Colonic mucosa (tissue), 4 donors: ENCODE measurements at regions of chr3 and their contacts with region 1.

Region 1: DNA sequence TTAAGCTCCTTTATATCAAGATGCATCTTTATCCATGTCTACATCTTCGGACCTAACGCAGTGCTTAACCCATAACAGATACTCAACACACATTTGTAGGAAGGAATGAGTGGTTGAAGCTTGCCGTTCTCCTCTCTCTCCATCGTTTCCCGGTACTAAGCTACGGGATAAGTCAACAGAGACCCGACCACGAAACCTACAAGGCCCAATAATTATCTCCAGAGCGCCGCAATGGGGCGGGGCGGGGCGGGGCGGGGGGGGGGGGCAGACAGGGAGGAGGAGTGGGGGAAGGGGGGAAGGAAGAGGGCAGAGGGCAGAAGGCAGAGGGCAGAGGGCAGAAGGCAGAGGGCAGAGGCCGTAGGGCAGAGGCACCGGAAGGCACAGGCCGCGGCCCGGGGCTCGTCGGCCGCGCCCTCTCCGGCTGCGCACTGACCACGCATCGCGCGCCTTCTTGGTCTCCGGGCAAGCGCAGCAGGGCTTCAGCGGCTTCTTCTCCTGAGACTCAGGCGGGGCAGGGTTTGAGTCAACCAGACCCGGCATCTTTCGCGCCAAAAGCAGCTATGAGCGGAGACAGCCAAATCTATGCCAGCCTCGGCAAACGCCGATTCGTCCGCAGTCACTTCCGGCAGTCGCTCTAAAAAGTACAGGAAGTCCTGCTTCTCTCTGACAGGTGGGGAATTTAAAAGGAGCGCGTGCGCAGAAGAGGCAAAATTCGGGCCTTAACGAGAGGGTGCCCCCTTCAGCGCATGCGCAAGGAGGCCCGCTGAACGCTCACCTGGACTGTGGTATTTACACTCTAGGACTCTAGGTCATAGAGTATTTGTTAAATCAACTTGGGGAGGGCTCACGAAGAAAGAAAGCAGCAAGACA is at the start of gene COX17:
- DNase-seq: peak; percentile 98
- H3K4me3 ChIP-seq: peak within 1 kb of the TSS; percentile 64
- H3K27ac ChIP-seq: peak within 1 kb of the TSS; percentile 91
- H3K4me1 ChIP-seq: peaks cover 9% of the 10 kb centered on the region
- H3K27me3 ChIP-seq: no peaks in the 10 kb centered on the region
- CTCF ChIP-seq: no peak
- total RNA-seq, gene COX17: 53.5 to 64.5 TPM

Region 2: DNA sequence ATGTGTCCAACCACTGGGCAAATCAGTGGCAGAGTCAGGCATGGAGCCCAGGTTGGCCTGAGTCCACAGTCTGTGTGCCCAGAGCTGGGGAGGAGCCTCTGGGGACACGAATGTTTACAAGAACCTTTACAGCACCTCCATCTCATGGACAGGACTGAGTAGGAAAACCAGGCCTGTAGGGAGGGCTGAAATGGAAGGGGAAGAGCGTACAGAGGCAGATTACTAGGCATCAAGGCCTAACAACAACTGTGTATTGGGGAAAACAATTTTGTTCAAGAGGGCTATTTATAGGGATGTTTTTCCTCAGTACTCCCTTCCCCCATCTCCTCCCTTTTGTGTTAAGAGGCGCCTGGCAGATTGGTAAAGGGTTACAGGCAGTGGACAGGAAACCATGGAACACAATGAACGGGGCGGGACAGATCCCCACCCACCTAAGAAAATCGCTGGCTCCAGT is 397.9 kb before region 1 on chr3:
- intact Hi-C with region 1: loop called (anchors 10 kb)
- DNase-seq: no peak
- H3K4me3 ChIP-seq: no peak overlapping the region
- H3K27ac ChIP-seq: no peak overlapping the region
- H3K4me1 ChIP-seq: no peaks in the 10 kb centered on the region
- H3K27me3 ChIP-seq: no peaks in the 10 kb centered on the region
- CTCF ChIP-seq: no peak

Region 3: DNA sequence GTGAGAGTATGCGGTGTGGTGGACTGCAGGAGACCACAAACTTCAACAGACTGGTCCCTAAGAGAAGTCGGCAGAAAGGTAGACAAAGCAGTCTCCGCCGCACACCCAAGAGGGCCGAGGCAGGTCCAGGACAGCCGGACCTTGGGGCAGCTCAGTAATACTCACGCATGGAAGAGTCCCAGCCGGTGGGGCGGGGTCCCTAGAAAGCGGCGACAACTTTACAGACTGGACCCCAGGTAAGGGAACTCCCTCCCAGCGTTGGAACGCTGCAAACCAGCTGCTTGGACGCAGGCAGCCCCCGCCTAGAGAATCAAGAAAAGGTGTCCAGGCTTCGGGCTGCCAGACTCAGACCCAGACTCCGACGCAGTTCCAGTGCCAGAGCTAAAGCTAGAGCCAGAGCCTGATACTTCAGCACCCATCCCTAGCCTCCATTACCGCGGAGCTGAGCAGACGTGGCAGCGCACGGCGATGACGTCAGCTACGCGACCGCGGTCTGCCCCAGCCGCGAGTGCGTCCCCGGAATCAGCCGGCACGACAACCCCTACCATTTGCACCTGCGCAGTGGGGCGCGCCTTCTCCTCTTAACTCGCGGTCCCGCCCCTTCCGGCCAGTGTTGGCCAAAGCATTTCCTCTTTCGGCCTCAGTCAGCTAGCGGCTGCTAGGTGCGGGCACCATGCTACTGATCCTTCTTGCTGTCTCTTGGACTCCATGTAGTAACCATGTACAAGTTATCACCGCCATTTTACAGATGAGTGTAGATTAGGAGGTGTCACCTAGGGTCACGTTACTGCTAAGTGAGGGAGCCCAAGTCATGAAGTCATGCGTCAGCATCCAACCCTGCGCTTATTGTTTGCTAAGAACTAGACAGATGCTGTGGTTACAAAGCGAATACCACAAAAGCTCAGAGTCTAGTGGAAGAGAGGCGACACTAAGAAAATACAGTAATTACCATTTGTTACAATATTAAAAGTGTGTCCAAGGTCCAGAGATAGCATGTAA is 213.5 kb before region 1 on chr3 and contains the start of gene TMEM39A:
- intact Hi-C with region 1: loop called (anchors 10 kb)
- DNase-seq: peak; percentile 100
- H3K4me3 ChIP-seq: peak within 1 kb of the TSS; percentile 97
- H3K27ac ChIP-seq: peak within 1 kb of the TSS; percentile 74
- H3K4me1 ChIP-seq: no peaks in the 10 kb centered on the region
- H3K27me3 ChIP-seq: no peaks in the 10 kb centered on the region
- CTCF ChIP-seq: no peak
- total RNA-seq, gene TMEM39A: 37.4 to 48.8 TPM